Body of pancreas (tissue), 4 donors: ENCODE measurements at regions of chr1 and their contacts with region 1.

Region 1: DNA sequence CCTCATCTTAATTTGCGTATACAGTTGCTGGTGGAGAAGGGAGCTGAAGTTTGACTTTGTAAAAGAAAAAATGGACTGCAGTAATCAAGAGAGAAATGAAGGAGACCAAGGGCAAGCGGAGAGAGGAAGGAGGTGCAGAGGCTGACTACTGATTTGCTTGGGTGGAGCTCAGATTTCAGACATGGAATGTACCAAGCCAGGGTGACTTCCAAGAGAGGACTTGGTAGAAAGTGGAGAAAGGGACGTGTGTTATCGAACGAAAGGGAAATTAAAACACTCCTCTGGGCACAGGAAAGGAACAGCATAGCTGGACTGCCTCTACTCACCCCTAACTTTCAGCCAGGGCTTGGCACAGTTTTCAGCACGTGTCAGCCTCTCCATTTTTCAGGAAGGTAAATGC is 15.1 kb upstream of the HEATR1 start:
- DNase-seq: no peak
- ATAC-seq: no peak
- H3K4me3 ChIP-seq: no peak overlapping the region
- H3K27ac ChIP-seq: no peak overlapping the region
- H3K4me1 ChIP-seq: no peaks in the 10 kb centered on the region
- H3K27me3 ChIP-seq: no peaks in the 10 kb centered on the region
- CTCF ChIP-seq: no peak
- POLR2A ChIP-seq: no peak

Region 2: GRCh38 chr1:235999259-235999925 is 620.0 kb before region 1 on chr1:
- intact Hi-C with region 1: no loop called
- DNase-seq: no peak
- ATAC-seq: no peak
- H3K4me3 ChIP-seq: no peak overlapping the region
- H3K27ac ChIP-seq: no peak overlapping the region
- H3K4me1 ChIP-seq: no peaks in the 10 kb centered on the region
- H3K27me3 ChIP-seq: no peaks in the 10 kb centered on the region
- CTCF ChIP-seq: no peak
- POLR2A ChIP-seq: no peak

Region 3: DNA sequence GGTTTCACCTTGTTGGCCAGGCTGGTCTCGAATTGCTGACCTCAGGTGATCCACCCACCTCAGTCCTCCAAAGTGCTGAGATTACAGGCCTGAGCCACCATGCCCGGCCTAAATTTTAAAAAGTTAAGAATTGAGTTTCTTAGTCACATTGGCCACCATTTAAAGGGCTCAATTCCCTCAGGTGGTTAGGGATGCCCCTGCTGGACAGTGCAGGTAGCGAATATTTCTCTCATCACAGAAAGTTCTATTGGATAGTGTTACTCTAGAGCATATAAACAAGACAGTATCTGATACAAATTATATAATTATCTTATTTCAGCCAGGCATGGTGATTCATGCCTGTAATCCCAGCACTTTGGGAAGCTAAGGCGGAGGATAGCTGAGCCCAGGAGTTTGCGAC is 951.1 kb after region 1 on chr1:
- intact Hi-C with region 1: loop called (anchors 10 kb)
- DNase-seq: no peak
- ATAC-seq: no peak
- H3K4me3 ChIP-seq: no peak overlapping the region
- H3K27ac ChIP-seq: no peak overlapping the region
- H3K4me1 ChIP-seq: no peaks in the 10 kb centered on the region
- H3K27me3 ChIP-seq: no peaks in the 10 kb centered on the region
- CTCF ChIP-seq: no peak
- POLR2A ChIP-seq: no peak